ENCODE measurements at regions of chr20 and their contacts with region 1.

Region 1: DNA sequence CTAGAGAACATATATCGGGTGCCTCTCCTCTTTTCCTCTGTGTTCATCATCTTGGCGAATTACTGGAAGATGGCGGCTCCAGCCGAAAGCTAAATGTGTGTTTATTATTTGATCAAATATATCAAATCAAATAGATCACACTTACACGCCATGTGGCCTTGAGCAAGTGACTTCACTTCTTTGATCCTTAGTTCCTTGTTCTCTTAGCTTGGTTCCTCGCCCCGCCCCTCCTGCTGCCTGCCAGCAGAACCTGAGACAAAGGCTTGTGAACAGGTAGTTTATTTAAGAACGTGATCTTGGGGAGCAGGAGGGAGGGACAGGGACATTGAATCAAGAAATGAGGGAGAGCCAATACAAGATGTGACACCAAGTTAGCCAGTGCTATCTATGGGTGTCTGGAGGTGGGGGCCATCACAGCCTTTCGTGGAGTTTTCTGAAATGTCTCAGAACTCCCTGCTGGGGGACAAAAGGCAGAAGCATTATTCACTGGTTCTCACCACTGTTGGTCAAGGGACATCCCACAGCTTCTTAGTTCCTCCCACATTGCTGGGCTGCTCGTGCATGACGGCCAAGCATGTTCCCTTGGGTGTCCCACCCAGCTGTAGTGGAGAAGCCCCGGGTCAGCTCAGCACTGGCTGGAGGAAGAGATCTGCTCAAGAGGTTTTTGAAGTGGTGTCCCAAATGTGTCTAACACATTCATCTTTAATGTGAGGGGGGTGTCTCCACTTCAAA is 44.9 kb upstream of the RNF24 start:
- DNase-seq: no peak
- H3K4me3 ChIP-seq: no peak overlapping the region
- H3K27ac ChIP-seq: no peak overlapping the region
- H3K4me1 ChIP-seq: peaks cover 11 to 67% (median 32%) of the 10 kb centered on the region in 4 experiments
- H3K27me3 ChIP-seq: no peaks in the 10 kb centered on the region

Region 2: DNA sequence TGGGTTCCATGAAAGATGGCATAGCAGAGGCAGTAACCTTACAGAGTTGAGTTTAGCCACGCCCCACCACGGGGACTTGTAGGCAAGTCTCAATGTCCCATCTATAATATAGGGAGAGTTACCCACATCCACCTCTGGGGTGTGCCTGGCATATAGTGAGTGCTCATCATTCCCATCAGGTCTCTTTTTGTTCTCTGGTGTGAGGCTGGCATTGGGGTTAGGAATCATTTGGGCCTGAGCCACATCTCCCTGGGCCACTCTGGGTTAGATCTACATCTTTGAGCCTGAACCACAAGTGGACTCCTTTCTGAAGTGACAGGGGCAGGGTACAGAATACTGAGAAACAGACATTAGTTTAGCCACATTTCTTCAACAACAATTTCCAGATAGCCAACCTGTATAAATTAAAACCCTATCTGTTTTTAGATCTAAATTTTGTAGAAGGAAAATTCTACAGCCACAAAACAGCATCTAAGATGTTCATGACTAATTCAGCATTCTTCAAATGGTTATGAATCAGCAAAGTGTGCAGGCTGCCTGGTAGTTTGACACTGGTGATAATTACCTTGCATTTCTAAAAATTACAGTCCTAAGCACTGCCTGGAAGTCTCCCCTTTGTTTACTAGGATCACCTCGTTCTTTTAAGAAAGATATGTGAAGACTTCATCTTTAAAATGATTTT is 65.0 kb before region 1 on chr20:
- CTCF ChIA-PET with region 1: no interaction called
- POLR2A ChIA-PET with region 1: no interaction called
- DNase-seq: peak in 2 of 3 donors; percentile 69 to 78
- H3K4me3 ChIP-seq: peak overlapping the region in 1 of 7 experiments; percentile 11
- H3K27ac ChIP-seq: peak overlapping the region in 1 of 2 experiments; percentile 68
- H3K4me1 ChIP-seq: peaks cover 10 to 34% (median 25%) of the 10 kb centered on the region in 4 experiments
- H3K27me3 ChIP-seq: no peaks in the 10 kb centered on the region

Region 3: GRCh38 chr20:4073852-4074741 is 13.9 kb after region 1 on chr20:
- CTCF ChIA-PET with region 1: interaction called, 15 read pairs
- POLR2A ChIA-PET with region 1: no interaction called
- DNase-seq: peak in 2 of 3 donors; percentile 57 to 69
- H3K4me3 ChIP-seq: peak overlapping the region in 1 of 7 experiments; percentile 48
- H3K27ac ChIP-seq: peak overlapping the region in 1 of 2 experiments; percentile 28
- H3K4me1 ChIP-seq: peaks cover 18 to 72% (median 51%) of the 10 kb centered on the region in 4 experiments
- H3K27me3 ChIP-seq: no peaks in the 10 kb centered on the region